Ascending aorta (tissue), 2 donors: ENCODE measurements at regions of chr14 and their contacts with region 1.

Region 1: DNA sequence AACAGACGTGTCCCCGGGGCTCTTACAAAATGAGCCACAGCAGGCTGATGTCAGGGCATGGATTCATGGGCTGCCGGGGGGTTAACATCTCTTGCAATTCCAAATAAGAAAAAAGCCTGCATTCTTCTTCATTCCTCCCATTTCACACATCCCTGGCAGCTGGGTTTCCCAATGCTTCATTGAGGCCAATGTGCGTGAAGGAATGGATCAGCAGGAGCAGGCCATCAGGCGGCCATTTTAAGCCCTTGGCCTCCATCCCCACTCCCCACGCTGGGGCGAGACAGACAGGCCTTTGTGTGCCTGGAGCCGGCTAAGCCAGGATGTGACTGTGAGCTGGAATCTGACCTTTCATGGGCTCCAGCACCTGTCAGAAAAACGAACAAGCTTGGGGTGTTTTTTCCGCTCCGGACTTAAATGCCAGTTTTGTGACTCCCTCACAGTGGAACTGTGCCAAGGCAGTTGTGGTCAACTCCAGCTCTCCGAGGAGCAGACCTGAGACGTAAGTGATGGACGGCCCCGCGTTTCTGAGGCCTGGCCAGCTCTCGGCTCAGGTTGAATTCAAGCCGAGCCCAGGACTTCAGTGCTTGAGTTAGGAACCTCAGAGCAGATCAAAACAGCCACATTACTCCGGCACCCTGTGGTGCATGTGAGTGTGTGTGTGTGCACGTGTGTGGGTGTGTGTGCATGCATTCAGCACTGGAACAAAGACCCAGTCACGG is 133.1 kb downstream of the TMEM30B start:
- DNase-seq: peak; percentile 36 to 84
- H3K4me3 ChIP-seq: no peak overlapping the region
- H3K27ac ChIP-seq: peak overlapping the region; percentile 88 to 92
- H3K4me1 ChIP-seq: peaks cover 4 to 60% of the 10 kb centered on the region in 2 donors
- H3K27me3 ChIP-seq: no peaks in the 10 kb centered on the region
- CTCF ChIP-seq: no peak

Region 2: GRCh38 chr14:60091550-60092530 is 1056.2 kb before region 1 on chr14 and contains the start of gene PCNX4:
- intact Hi-C with region 1: loop called (anchors 10 kb)
- DNase-seq: peak; percentile 88 to 98
- H3K4me3 ChIP-seq: peak within 1 kb of the TSS; percentile 72 to 92
- H3K27ac ChIP-seq: peak within 1 kb of the TSS; percentile 95 to 96
- H3K4me1 ChIP-seq: peaks cover 0 to 11% of the 10 kb centered on the region in 2 donors
- H3K27me3 ChIP-seq: no peaks in the 10 kb centered on the region
- CTCF ChIP-seq: no peak
- total RNA-seq, gene PCNX4: 47.8 TPM

Region 3: GRCh38 chr14:61034416-61035120 is 113.4 kb before region 1 on chr14:
- intact Hi-C with region 1: no loop called
- DNase-seq: no peak
- H3K4me3 ChIP-seq: no peak overlapping the region
- H3K27ac ChIP-seq: no peak overlapping the region
- H3K4me1 ChIP-seq: no peaks in the 10 kb centered on the region
- H3K27me3 ChIP-seq: no peaks in the 10 kb centered on the region
- CTCF ChIP-seq: no peak

Region 4: GRCh38 chr14:61103481-61104339 is 44.3 kb before region 1 on chr14:
- intact Hi-C with region 1: loop called (anchors 2 kb)
- DNase-seq: peak; percentile 50 to 91
- H3K4me3 ChIP-seq: peak overlapping the region in 1 of 2 donors; percentile 16
- H3K27ac ChIP-seq: peak overlapping the region; percentile 79 to 84
- H3K4me1 ChIP-seq: peaks cover 21 to 27% of the 10 kb centered on the region in 2 donors
- H3K27me3 ChIP-seq: no peaks in the 10 kb centered on the region
- CTCF ChIP-seq: no peak

Region 5: GRCh38 chr14:61188978-61189808 is 41.2 kb after region 1 on chr14:
- intact Hi-C with region 1: loop called (anchors 2 kb)
- DNase-seq: peak in 1 of 2 donors; percentile 79
- H3K4me3 ChIP-seq: peak overlapping the region; percentile 46 to 54
- H3K27ac ChIP-seq: peak overlapping the region; percentile 63 to 65
- H3K4me1 ChIP-seq: peaks cover 8 to 16% of the 10 kb centered on the region in 2 donors
- H3K27me3 ChIP-seq: no peaks in the 10 kb centered on the region
- CTCF ChIP-seq: peak; percentile 55 to 83 (median 59)

Region 6: DNA sequence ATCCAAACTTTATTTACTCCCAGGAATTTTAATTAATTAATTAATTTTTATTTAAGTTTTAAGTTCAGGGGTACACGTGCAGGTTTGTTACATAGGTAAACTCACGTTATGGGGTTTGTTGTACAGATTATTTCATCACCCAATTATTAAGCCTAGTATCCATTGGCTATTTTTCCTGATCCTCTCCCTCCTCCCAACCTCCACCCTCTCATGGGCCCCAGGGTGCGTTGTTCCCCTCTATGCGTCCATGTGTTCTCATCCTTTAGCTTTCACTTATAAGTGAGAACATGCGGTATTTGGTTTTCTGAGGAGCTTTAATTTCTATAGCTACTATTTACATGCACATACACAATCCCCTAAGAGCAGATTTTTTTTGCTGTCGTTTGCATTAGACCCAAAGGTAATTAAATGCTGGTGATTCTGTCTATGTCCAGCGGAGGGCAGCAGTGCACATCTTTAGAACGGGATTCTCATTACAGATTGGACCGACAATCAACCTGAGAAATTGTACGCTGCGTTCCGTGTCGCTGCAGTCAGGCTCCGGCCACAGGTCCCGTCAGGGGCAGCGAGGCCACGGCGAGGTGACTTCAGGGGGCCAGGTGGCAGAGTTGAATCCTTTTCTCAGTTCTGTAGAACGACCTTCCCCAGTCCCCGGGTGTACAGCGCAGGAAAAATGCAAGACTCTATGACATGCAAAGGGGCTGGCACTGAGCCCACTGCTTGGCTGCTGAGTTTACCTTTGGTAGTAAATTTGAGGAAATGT is 121.5 kb after region 1 on chr14:
- intact Hi-C with region 1: no loop called
- DNase-seq: peak in 1 of 2 donors; percentile 92
- H3K4me3 ChIP-seq: peak overlapping the region; percentile 35 to 57
- H3K27ac ChIP-seq: no peak overlapping the region
- H3K4me1 ChIP-seq: no peaks in the 10 kb centered on the region
- H3K27me3 ChIP-seq: no peaks in the 10 kb centered on the region
- CTCF ChIP-seq: peak; percentile 69 to 79 (median 70)

Region 7: GRCh38 chr14:61368114-61368726 is 220.2 kb after region 1 on chr14:
- intact Hi-C with region 1: no loop called
- DNase-seq: peak in 1 of 2 donors; percentile 25
- H3K4me3 ChIP-seq: no peak overlapping the region
- H3K27ac ChIP-seq: no peak overlapping the region
- H3K4me1 ChIP-seq: no peaks in the 10 kb centered on the region
- H3K27me3 ChIP-seq: no peaks in the 10 kb centered on the region
- CTCF ChIP-seq: no peak